ENCODE measurements at regions of chr5 and their contacts with region 1.

Region 1: DNA sequence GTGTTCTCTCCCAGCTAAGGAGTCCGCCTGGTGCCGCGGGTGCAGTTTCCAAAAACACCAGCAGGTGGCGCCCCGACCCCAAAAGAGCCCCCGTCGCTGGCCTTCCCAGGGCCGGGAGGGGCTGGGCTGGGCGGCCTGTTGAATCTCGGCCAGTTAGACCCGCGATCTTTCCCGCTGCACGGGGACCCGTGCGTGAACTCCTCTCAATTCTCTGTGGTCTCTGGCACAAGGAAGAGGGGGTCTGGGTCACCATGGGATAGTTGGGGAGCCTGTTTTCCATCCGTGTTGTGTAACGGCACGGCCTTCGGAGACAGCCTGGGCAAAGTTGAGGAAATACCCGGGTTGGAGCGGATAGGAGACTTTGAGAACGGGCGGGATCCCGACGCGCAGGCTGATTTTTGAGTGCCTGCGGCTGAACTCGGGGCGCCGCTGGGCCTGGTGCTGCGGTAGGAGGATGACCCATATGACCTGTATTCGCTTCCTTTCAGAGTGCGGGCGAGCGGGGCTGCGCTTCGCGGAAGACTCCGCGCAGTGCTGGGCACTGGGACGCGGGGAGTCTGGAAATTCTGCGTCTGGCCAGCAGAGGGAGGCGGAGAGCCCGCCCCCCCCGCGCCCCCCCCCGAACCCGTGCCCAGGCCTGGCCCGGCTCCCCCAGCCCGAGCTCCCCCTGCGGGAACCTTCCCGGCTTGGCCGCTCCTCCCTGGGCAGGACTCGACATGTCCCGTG is 7.9 kb upstream of the PSD2 start:
- DNase-seq: peak; percentile 69 to 94
- H3K4me3 ChIP-seq: peak overlapping the region; percentile 47
- H3K4me1 ChIP-seq: no peaks in the 10 kb centered on the region
- H3K27me3 ChIP-seq: 0 out of 2 replicates have a peak, but pooled peaks cover 5% of the 10 kb centered on the region

Region 2: DNA sequence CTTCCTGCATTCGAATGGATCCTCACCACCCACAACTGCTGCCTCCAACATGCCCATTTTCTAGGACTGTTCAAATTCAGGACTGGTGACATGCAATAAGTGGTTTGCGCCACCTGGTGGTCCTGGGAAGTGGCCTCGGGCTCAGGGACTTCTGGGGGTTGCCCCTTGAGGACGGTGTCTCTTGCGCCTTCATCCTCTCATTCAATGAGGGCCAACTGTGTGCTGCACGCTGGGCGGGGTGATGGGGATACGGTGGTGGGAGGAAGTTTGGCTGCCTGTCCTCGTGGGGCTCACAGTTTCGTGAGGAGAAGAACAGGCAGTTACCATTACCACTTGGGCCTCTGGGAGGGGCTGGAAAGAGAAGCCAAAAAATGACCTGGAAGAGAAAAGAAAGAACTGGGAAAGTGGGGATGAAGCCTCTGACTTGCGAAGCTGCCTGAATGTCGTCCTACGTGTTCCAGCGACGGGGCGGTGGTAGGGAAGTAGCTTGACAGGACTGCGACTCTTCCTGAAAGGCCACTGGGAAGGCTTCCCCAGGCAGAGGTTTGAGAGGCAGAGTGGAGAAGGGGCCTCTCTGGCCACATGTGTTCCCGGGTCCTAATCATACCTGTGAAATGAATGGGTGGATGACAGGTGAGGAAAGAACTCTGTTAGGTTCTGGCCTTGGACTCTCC is 56.9 kb after region 1 on chr5:
- in situ Hi-C with region 1: loop called (anchors 10 kb)
- DNase-seq: peak; percentile 60 to 90
- H3K4me3 ChIP-seq: no peak overlapping the region
- H3K4me1 ChIP-seq: no peaks in the 10 kb centered on the region
- H3K27me3 ChIP-seq: no peaks in the 10 kb centered on the region

Region 3: DNA sequence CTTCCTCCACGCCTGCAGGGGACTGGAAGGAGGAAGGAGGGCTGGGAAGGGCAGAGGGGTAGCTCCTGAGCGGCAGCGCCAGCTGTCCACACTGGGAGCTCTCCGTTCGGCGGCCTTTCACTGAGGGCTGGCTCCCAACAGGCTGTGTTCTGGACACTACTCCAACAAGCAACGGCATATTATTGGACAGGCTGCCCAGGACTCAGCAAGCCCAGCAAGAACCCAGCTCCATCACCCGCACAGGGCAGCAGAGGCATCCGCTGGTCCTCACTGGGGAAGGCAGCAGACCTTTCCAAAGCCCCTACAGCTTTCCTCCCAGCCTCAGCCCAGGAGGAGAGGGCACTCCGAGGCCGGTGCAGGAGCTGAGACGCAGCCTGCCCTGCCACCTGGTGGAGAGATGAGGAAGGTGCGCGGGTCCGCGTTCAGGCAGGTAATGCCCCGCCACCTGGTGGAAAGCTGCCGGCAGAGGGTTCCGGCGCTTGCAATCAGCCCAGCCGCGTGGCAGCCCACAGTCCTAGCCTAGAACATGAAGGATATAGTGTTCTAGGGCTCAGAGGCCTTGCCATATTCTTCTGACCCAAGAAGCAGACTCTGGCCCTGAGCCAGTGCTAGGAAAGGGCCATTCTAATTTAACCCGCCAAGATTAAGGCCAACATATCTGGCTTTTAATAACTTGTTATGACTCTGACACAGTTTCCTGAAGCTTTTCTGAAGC is 181.0 kb after region 1 on chr5:
- in situ Hi-C with region 1: loop called (anchors 5 kb)
- DNase-seq: peak; percentile 77 to 94
- H3K4me3 ChIP-seq: no peak overlapping the region
- H3K4me1 ChIP-seq: no peaks in the 10 kb centered on the region
- H3K27me3 ChIP-seq: no peaks in the 10 kb centered on the region

Region 4: GRCh38 chr5:140157032-140157803 is 369.5 kb after region 1 on chr5:
- in situ Hi-C with region 1: loop called (anchors 5 kb)
- DNase-seq: peak; percentile 87 to 94
- H3K4me3 ChIP-seq: peak overlapping the region; percentile 14
- H3K4me1 ChIP-seq: peaks cover 6% of the 10 kb centered on the region
- H3K27me3 ChIP-seq: no peaks in the 10 kb centered on the region